AG04450 (cell line): ENCODE measurements at regions of chr4 and their contacts with region 1.

Region 1: GRCh38 chr4:54227256-54228055 is 1.6 kb upstream of the PDGFRA start:
- DNase-seq: no peak
- H3K4me3 ChIP-seq: peak overlapping the region; percentile 97
- H3K27ac ChIP-seq: peak overlapping the region; percentile 75
- H3K27me3 ChIP-seq: no peaks in the 10 kb centered on the region
- CTCF ChIP-seq: no peak

Region 2: GRCh38 chr4:54082168-54082567 is 145.3 kb before region 1 on chr4:
- CTCF ChIA-PET with region 1: interaction called, 10 read pairs
- POLR2A ChIA-PET with region 1: no interaction called
- DNase-seq: peak; percentile 99
- H3K4me3 ChIP-seq: no peak overlapping the region
- H3K27ac ChIP-seq: peak overlapping the region; percentile 22
- H3K27me3 ChIP-seq: no peaks in the 10 kb centered on the region
- CTCF ChIP-seq: no peak